ENCODE measurements at regions of chr3 and their contacts with region 1.

Region 1: GRCh38 chr3:42080452-42080891 is 10.7 kb upstream of the TRAK1 start:
- DNase-seq: peak; percentile 47
- ATAC-seq: peak; percentile 86
- H3K4me3 Mint-ChIP-seq: peak overlapping the region; percentile 7
- H3K27ac Mint-ChIP-seq: peak overlapping the region; percentile 75
- H3K4me1 Mint-ChIP-seq: peaks cover 57% of the 10 kb centered on the region
- H3K27me3 Mint-ChIP-seq: no peaks in the 10 kb centered on the region

Region 2: GRCh38 chr3:41836360-41837134 is 243.9 kb before region 1 on chr3:
- CTCF ChIA-PET with region 1: no interaction called
- POLR2A ChIA-PET with region 1: no interaction called
- intact Hi-C with region 1: loop called (anchors 5 kb)
- DNase-seq: peak; percentile 32
- ATAC-seq: peak; percentile 90
- H3K4me3 Mint-ChIP-seq: no peak overlapping the region
- H3K27ac Mint-ChIP-seq: peak overlapping the region; percentile 13
- H3K4me1 Mint-ChIP-seq: peaks cover 20% of the 10 kb centered on the region
- H3K27me3 Mint-ChIP-seq: no peaks in the 10 kb centered on the region

Region 3: DNA sequence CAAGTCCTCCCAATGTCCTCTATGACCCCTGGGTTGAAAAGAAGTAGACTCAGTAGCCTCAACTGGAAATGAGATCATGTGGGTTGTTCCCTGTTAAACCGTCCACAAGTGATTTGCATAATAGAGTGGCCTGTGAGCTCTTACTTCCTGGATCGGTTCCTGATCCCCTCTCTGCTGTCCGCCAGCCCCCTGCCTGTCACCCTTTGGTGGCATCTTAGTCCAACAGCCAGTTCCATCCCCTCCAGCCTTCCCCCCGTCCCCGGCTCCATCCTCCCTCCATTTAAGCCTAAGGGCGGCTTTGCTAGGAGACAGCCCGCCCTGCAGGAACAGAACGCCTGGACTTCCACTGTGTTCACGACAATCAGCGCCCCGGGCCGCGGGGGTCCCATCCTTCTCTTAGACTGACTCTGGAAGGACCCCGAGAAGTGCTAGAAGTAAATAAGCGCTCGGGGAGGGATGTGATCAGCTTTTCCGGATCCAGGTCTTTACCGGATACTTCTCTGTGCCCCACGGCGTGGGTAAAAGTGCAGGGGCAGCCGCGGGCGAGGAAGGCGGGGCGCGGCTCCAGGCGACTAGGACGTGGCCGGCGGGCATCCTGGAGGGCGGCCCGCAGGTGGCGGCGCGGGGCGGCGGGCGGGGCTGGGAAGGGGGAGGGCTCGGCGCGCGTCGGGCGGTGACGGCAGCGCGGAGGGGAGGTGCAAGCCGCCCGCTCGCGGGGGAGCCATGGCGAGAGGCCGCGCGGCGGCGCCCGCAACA is 67.4 kb before region 1 on chr3:
- CTCF ChIA-PET with region 1: interaction called, 5 read pairs
- POLR2A ChIA-PET with region 1: interaction called, 3 read pairs
- intact Hi-C with region 1: loop called (anchors 2 to 5 kb)
- DNase-seq: peak; percentile 88
- ATAC-seq: peak; percentile 75
- H3K4me3 Mint-ChIP-seq: peak overlapping the region; percentile 90
- H3K27ac Mint-ChIP-seq: peak overlapping the region; percentile 92
- H3K4me1 Mint-ChIP-seq: peaks cover 46% of the 10 kb centered on the region
- H3K27me3 Mint-ChIP-seq: no peaks in the 10 kb centered on the region

Region 4: DNA sequence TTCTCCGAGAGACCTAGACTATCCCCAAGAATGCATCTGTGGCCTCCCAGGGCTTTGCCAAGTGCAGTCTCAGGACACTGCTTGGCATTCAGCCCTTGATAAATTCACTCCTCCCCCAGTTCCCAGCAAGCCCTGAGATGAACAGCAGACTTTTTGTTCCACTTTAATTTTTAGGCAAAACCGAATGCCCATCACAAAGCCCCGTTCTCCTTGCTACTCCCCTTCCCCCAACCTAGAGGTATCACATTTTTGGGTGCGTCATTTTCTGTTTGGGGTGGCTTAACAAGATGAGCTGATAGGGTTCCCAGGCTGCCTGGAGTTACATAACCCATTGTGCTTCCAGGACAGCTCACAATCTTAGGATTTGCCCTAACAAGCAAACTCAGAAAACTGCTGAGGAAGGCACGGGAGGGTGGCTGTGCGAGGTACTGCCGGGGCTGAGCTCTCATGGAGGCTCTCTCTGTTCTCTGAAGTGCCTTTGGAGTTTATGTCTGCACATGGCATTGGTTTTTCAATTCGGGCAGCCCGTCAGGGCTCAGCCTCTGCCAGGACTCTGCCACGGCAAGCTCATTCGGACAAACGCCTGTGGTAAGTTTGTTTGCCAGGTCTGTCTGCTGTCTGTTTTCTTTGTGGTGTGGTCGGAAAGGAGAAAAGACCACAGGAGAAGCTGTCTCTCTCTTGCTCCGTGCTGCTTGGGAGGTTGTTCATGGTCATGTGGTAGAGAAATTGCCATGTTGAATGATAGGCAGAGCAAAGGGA is 10.7 kb after region 1 on chr3 and contains the start of gene TRAK1:
- CTCF ChIA-PET with region 1: no interaction called
- POLR2A ChIA-PET with region 1: interaction called, 3 read pairs
- intact Hi-C with region 1: loop called in 1 of 2 experiments (anchors 1 kb)
- DNase-seq: no peak
- ATAC-seq: no peak
- H3K4me3 Mint-ChIP-seq: no peak within 1 kb of the TSS
- H3K27ac Mint-ChIP-seq: no peak within 1 kb of the TSS
- H3K4me1 Mint-ChIP-seq: peaks cover 44% of the 10 kb centered on the region
- H3K27me3 Mint-ChIP-seq: no peaks in the 10 kb centered on the region
- total RNA-seq, gene TRAK1: 22.4 to 23.6 TPM

Region 5: GRCh38 chr3:42468111-42468510 is 387.6 kb after region 1 on chr3:
- CTCF ChIA-PET with region 1: no interaction called
- POLR2A ChIA-PET with region 1: no interaction called
- intact Hi-C with region 1: no loop called
- DNase-seq: no peak
- ATAC-seq: no peak
- H3K4me3 Mint-ChIP-seq: no peak overlapping the region
- H3K27ac Mint-ChIP-seq: no peak overlapping the region
- H3K4me1 Mint-ChIP-seq: no peaks in the 10 kb centered on the region
- H3K27me3 Mint-ChIP-seq: peaks cover 2% of the 10 kb centered on the region

Measured in activated CD4-positive, alpha-beta T cell treated with anti-CD3 and anti-CD28 coated beads for 36 hours (primary cell).